Endothelial cell of umbilical vein (primary cell): ENCODE measurements at regions of chr2 and their contacts with region 1.

Region 1: GRCh38 chr2:224284134-224284946 is 117.6 kb downstream of the FAM124B start:
- DNase-seq: peak; percentile 60
- H3K4me3 ChIP-seq: no peak overlapping the region
- H3K27ac ChIP-seq: no peak overlapping the region
- H3K4me1 ChIP-seq: no peaks in the 10 kb centered on the region
- H3K27me3 ChIP-seq: peaks cover 6 to 10% of the 10 kb centered on the region in 2 experiments
- CTCF ChIP-seq: peak; percentile 12 to 14
- POLR2A ChIP-seq: no peak

Region 2: DNA sequence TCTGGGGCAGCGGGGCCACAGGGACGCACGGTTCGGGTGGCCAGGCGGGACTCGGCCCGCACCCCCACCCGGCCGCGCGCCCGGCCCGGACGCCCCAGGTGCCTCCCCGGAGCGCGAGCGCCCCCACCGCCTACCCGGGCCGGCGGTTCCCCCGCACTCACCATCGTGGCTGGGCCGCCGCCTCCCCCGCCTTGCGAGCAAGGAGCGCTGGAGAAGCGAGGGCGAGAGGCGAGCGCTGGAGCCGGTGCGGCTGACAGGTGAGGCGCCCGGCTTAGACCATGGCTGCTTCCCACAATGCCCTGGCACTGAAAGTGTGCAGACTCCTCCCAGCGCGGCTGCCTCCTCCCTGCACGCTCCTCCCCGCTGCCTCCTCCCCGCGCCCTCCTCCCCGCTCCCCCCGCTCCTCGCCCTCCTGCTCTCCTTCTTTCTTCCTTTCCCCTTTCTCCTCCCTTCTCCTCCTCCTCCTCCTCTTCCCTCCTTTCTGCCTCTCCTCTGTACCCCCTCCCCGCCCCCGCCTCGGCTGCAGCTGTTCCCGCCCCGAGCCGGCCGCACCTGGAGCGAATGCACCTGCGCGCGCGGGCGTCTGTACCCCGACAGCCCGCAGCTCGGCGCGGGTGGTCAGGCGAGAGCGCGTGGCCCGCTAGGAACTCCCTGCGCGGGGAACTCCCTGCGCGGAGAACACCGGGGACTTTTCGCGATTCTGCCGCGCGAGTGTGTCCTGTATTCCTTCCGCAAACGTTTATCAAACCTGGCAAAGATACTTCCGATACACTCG is 446.9 kb before region 1 on chr2 and contains the start of gene AP1S3:
- CTCF ChIA-PET with region 1: no interaction called
- POLR2A ChIA-PET with region 1: no interaction called
- dilution Hi-C with region 1: no loop called
- intact Hi-C with region 1: no loop called
- DNase-seq: peak; percentile 32
- H3K4me3 ChIP-seq: peak within 1 kb of the TSS; percentile 59 to 68 (median 63)
- H3K27ac ChIP-seq: no peak within 1 kb of the TSS
- H3K4me1 ChIP-seq: peaks cover 7% of the 10 kb centered on the region
- H3K27me3 ChIP-seq: no peaks in the 10 kb centered on the region
- CTCF ChIP-seq: no peak
- POLR2A ChIP-seq: no peak
- total RNA-seq, gene AP1S3: 3.2 and 3.8 TPM in 2 replicates

Region 3: DNA sequence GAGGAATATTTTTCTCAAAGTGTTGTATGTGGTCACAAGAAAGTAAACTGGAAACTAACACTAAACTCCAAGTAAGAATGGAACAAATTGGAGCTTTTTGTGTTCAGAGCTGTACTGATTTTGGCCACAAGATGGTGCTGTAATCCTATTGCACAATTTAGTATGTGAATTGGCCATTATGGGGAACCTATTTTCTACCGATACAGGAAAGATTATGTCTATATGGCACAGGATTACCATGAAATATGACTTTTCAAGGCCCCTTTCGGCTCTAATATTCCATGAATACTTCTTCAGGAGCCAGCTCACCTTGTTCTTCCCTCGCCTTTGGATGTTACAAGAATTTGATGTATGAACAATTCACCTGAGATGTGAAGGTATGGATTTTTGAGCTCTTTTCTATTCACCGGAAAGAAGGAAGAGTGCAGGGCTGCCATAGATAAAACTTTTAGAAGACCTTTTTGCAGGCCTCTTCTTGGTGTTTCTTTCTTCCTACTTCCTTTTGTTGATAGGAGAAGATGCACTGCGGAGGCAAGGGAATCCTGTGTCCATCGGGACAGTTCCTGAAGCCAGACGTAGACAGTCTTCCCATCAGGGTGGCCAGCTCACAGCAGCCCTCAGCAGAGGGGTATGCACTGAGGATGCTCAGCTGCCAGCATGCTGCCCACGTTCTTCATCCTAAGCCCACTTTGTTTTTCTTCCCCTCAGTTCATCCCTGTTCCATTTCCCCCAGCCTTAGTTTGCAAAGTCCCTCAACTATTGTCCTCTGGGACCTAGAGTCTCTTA is 313.8 kb before region 1 on chr2:
- CTCF ChIA-PET with region 1: interaction called, 545 read pairs
- POLR2A ChIA-PET with region 1: no interaction called
- dilution Hi-C with region 1: no loop called
- intact Hi-C with region 1: loop called (anchors 1 kb)
- DNase-seq: peak; percentile 76
- H3K4me3 ChIP-seq: no peak overlapping the region
- H3K27ac ChIP-seq: no peak overlapping the region
- H3K4me1 ChIP-seq: no peaks in the 10 kb centered on the region
- H3K27me3 ChIP-seq: no peaks in the 10 kb centered on the region
- CTCF ChIP-seq: peak; percentile 65 to 68
- POLR2A ChIP-seq: no peak

Region 4: GRCh38 chr2:223993621-223994232 is 290.6 kb before region 1 on chr2:
- CTCF ChIA-PET with region 1: interaction called, 875 read pairs
- POLR2A ChIA-PET with region 1: no interaction called
- dilution Hi-C with region 1: no loop called
- intact Hi-C with region 1: loop called (anchors 1 kb)
- DNase-seq: peak; percentile 74
- H3K4me3 ChIP-seq: no peak overlapping the region
- H3K27ac ChIP-seq: no peak overlapping the region
- H3K4me1 ChIP-seq: no peaks in the 10 kb centered on the region
- H3K27me3 ChIP-seq: no peaks in the 10 kb centered on the region
- CTCF ChIP-seq: peak; percentile 69 to 75
- POLR2A ChIP-seq: no peak

Region 5: GRCh38 chr2:224023188-224023587 is 261.2 kb before region 1 on chr2:
- CTCF ChIA-PET with region 1: interaction called, 9 read pairs
- POLR2A ChIA-PET with region 1: no interaction called
- dilution Hi-C with region 1: loop called (anchors 25 kb)
- intact Hi-C with region 1: no loop called
- DNase-seq: no peak
- H3K4me3 ChIP-seq: no peak overlapping the region
- H3K27ac ChIP-seq: no peak overlapping the region
- H3K4me1 ChIP-seq: no peaks in the 10 kb centered on the region
- H3K27me3 ChIP-seq: no peaks in the 10 kb centered on the region
- CTCF ChIP-seq: no peak
- POLR2A ChIP-seq: no peak

Region 6: DNA sequence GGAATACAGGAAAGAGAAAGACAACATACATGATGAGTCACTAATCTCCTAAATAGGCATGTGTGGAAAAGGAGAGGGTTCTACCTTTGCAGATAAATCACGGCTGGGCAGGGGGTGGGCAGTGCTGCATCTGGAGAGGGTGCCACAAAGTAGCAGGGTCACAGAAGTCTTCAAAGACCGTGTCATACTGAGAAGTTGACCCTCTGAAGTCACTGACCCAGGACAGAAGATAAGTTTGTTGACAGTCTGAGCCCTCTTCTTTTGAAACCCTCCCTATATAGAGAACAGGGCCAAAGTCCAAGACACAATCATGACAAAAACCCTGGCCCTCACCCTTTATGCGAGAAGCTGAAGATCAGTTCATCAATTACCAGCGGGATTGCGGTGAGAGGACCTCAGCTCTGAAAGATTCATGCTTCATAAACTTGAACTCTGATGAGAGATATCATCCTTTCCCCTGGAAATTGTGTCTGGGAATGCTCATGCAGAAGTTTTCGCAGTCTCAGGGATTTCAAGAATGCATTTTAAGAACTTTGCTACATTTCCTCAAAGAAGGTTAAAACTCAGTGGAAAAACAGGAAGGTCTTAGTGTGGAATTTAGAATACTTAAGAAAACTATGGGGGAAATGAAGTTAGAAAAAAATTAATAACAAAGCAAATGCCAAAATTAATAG is 12.0 kb before region 1 on chr2:
- CTCF ChIA-PET with region 1: interaction called, 31 read pairs
- POLR2A ChIA-PET with region 1: no interaction called
- dilution Hi-C with region 1: no loop called
- intact Hi-C with region 1: no loop called
- DNase-seq: no peak
- H3K4me3 ChIP-seq: no peak overlapping the region
- H3K27ac ChIP-seq: no peak overlapping the region
- H3K4me1 ChIP-seq: no peaks in the 10 kb centered on the region
- H3K27me3 ChIP-seq: peaks cover 6 to 7% of the 10 kb centered on the region in 2 experiments
- CTCF ChIP-seq: no peak
- POLR2A ChIP-seq: no peak